Dorsolateral prefrontal cortex (tissue), 120 donors: ENCODE measurements at regions of chr11 and their contacts with region 1.

Region 1: GRCh38 chr11:82796998-82797964 is 63.6 kb upstream of the FAM181B start:
- DNase-seq: peak in 8 of 10 donors; percentile 29 to 66 (median 53)
- H3K4me3 ChIP-seq: peak overlapping the region in 27 of 59 donors; percentile 3 to 48 (median 22)
- H3K27ac ChIP-seq: peak overlapping the region; percentile 66 to 99 (median 95)
- H3K27me3 ChIP-seq: no peaks in the 10 kb centered on the region
- CTCF ChIP-seq: peak in 8 of 56 donors; percentile 12 to 29 (median 17)

Region 2: DNA sequence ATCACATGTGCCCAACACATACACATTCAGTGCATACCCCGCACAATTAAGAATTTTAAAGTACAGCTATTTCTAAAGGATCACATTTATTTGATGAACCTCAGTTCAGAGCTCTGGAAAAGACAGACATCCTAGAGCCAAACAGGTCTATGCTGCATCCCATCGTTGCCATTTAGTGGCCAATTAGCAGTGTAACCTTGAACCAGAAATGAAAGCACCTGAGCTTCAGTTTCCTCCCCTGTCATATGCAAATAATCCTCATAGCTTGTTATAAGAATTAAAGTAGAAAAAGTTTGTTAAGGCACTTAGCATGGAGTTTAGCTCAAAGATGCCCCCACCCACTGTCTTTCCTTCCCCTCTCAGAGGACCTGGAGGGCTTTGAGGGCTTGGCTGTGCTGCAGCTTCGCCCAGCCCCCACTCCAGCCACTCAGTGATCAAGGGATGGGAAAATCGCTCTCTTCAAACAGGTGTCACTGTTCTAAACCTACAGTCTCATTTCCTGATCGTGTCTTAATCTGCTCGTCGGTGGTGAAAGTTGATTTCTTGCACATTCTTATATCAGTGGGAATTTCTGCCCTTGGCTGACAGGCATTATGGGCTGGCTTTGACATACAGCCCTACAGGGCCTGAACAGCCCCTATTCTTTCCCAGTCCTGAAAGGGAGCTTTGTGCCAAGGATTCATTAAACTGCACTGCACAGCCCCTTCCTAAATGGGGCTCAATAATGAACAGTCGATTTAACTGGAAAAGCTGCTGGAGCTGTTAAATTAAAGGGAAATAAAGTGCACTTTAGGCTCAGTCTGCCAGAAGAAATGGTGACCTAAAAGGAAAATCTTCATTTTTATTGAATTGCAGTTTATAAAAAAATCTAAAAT is 40.3 kb before region 1 on chr11:
- intact Hi-C with region 1: loop called (anchors 5 kb)
- DNase-seq: peak in 5 of 10 donors; percentile 9 to 62 (median 43)
- H3K4me3 ChIP-seq: peak overlapping the region in 43 of 59 donors; percentile 2 to 53 (median 30)
- H3K27ac ChIP-seq: peak overlapping the region; percentile 11 to 95 (median 87)
- H3K27me3 ChIP-seq: no peaks in the 10 kb centered on the region
- CTCF ChIP-seq: peak in 11 of 56 donors; percentile 6 to 36 (median 15)

Region 3: GRCh38 chr11:82858556-82859091 is 61.3 kb after region 1 on chr11:
- intact Hi-C with region 1: loop called in 1 of 2 experiments (anchors 5 kb)
- DNase-seq: no peak
- H3K4me3 ChIP-seq: peak overlapping the region in 40 of 59 donors; percentile 0 to 50 (median 28)
- H3K27ac ChIP-seq: peak overlapping the region; percentile 29 to 91 (median 77)
- H3K27me3 ChIP-seq: no peaks in the 10 kb centered on the region
- CTCF ChIP-seq: peak in 3 of 56 donors; percentile 10 to 16 (median 13)